B cell (primary cell): ENCODE measurements at regions of chr3 and their contacts with region 1.

Region 1: DNA sequence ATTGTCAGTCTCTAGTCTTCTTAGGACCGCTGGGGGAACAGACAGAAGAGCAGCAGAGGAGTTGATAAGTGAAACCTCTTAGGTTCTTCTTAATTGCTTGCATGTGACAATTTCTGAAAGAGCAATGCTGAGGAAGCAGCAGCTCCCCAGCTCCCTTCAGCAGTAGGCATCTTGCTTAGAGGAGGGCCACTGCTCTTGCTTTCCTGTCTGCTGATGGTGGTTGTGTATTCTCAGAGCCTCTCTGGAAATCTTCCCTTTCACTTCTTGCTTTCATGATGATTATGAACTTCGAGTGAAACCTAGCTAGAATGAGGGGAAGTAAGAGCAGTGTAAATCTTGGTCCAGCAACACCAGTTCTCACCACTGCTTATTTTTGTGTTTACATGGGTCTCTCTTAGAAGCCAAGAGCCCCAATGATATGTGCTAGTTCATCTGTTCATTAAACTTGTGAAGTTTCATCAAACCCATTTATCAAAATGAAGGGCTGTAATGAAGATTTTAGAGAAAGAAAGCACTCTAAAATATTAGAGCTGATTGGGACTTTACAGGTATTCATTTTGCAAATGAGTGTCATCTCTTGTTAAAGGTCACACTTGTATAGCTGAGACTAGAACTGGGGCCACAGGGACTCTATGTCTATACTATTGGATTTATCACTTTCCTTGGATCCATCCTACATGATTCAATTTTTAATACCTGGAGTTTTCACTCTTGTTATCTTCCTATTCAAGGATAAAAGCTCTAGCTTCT is 246.7 kb downstream of the LPP start:
- DNase-seq: peak; percentile 82
- ATAC-seq: peak; percentile 87
- H3K4me3 ChIP-seq: no peak overlapping the region
- H3K4me3 Mint-ChIP-seq: peak overlapping the region; percentile 53
- H3K27ac ChIP-seq: peak overlapping the region; percentile 89 to 95
- H3K27ac Mint-ChIP-seq: peak overlapping the region; percentile 95
- H3K4me1 ChIP-seq: peaks cover 63 to 72% of the 10 kb centered on the region in 2 donors
- H3K4me1 Mint-ChIP-seq: peaks cover 87% of the 10 kb centered on the region
- H3K27me3 ChIP-seq: no peaks in the 10 kb centered on the region
- H3K27me3 Mint-ChIP-seq: no peaks in the 10 kb centered on the region
- CTCF ChIP-seq: no peak

Region 2: GRCh38 chr3:188389711-188390342 is 10.8 kb before region 1 on chr3:
- CTCF ChIA-PET with region 1: interaction called, 20 read pairs
- POLR2A ChIA-PET with region 1: interaction called, 6 read pairs
- intact Hi-C with region 1: loop called (anchors 1 kb)
- DNase-seq: peak; percentile 86
- ATAC-seq: peak; percentile 88
- H3K4me3 ChIP-seq: peak overlapping the region in 1 of 5 experiments; percentile 42
- H3K4me3 Mint-ChIP-seq: peak overlapping the region; percentile 82
- H3K27ac ChIP-seq: peak overlapping the region; percentile 94 to 96
- H3K27ac Mint-ChIP-seq: peak overlapping the region; percentile 99
- H3K4me1 ChIP-seq: peaks cover 55 to 75% of the 10 kb centered on the region in 2 donors
- H3K4me1 Mint-ChIP-seq: peaks cover 80% of the 10 kb centered on the region
- H3K27me3 ChIP-seq: no peaks in the 10 kb centered on the region
- H3K27me3 Mint-ChIP-seq: no peaks in the 10 kb centered on the region
- CTCF ChIP-seq: no peak

Region 3: DNA sequence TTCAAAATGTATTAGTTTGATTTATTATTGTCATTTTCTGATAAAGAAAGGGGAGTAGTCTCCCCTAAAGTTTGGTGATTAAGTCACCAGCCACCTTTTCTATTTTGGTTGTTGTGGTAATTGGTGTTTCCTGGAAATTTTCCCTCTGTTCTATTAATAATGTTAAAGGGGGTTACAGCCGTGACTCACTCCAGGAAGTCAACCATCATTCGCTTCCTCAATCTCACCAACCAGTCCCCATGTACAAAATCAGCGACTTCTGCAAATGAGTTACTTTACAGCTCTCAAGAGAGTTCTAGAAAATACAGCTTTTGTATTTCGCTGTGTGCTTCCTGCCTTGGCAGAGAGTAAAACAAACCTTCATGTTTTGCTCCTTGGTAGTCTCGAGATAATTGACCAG is 38.4 kb after region 1 on chr3:
- CTCF ChIA-PET with region 1: interaction called, 6 read pairs
- POLR2A ChIA-PET with region 1: no interaction called
- intact Hi-C with region 1: loop called (anchors 2 kb)
- DNase-seq: peak; percentile 88
- ATAC-seq: peak; percentile 90
- H3K4me3 ChIP-seq: peak overlapping the region in 1 of 5 experiments; percentile 27
- H3K4me3 Mint-ChIP-seq: peak overlapping the region; percentile 44
- H3K27ac ChIP-seq: peak overlapping the region; percentile 93 to 96
- H3K27ac Mint-ChIP-seq: peak overlapping the region; percentile 92
- H3K4me1 ChIP-seq: peaks cover 71 to 80% of the 10 kb centered on the region in 2 donors
- H3K4me1 Mint-ChIP-seq: peaks cover 82% of the 10 kb centered on the region
- H3K27me3 ChIP-seq: no peaks in the 10 kb centered on the region
- H3K27me3 Mint-ChIP-seq: no peaks in the 10 kb centered on the region
- CTCF ChIP-seq: no peak

Region 4: GRCh38 chr3:188489639-188490405 is 89.2 kb after region 1 on chr3:
- CTCF ChIA-PET with region 1: interaction called, 3 read pairs
- POLR2A ChIA-PET with region 1: no interaction called
- intact Hi-C with region 1: loop called (anchors 5 kb)
- DNase-seq: peak; percentile 80
- ATAC-seq: peak; percentile 90
- H3K4me3 ChIP-seq: peak overlapping the region in 1 of 5 experiments; percentile 13
- H3K4me3 Mint-ChIP-seq: peak overlapping the region; percentile 32
- H3K27ac ChIP-seq: peak overlapping the region; percentile 61 to 85
- H3K27ac Mint-ChIP-seq: peak overlapping the region; percentile 81
- H3K4me1 ChIP-seq: peaks cover 32 to 33% of the 10 kb centered on the region in 2 donors
- H3K4me1 Mint-ChIP-seq: peaks cover 43% of the 10 kb centered on the region
- H3K27me3 ChIP-seq: no peaks in the 10 kb centered on the region
- H3K27me3 Mint-ChIP-seq: no peaks in the 10 kb centered on the region
- CTCF ChIP-seq: no peak